ENCODE measurements at regions of chr10 and their contacts with region 1.

Region 1: DNA sequence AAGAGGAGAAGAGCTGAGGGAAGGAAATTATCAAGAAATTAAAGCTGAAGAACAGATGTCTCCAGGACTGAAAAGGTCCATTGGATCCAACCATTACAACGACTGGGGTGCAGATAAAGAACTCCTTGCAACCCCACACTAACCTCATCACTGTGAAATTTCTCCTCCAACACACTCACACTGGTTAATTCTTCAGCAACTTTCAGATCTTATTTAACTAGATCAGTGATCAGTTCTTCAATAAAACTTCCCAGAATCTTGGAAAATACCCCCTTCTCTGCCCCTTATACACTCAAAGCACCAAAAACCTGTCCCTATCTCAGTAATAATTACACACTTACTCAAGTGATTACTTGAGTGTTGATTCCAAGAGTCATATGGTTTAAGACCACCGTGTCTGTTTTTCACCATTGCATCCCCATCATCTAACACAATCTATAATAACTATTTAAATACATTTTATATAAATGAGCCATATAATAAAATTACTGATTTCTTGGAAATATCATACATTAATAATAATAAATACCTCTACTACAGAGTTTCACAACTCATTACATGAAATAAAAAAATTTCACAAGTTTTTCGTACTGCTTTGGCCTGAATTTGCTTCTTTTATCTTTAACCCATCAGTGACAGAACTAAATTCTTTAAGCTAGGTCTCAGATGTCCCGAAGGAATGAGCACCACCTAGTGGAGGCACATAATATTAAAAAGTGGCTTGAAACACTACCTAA is 123.7 kb downstream of the MPP7 start:
- DNase-seq: peak; percentile 51
- ATAC-seq: peak; percentile 28
- H3K4me3 Mint-ChIP-seq: peak overlapping the region; percentile 43
- H3K27ac Mint-ChIP-seq: peak overlapping the region; percentile 97
- H3K4me1 Mint-ChIP-seq: peaks cover 36% of the 10 kb centered on the region
- H3K27me3 Mint-ChIP-seq: no peaks in the 10 kb centered on the region

Region 2: GRCh38 chr10:27099916-27100812 is 1079.0 kb before region 1 on chr10 and contains the start of gene ANKRD26:
- CTCF ChIA-PET with region 1: no interaction called
- POLR2A ChIA-PET with region 1: no interaction called
- intact Hi-C with region 1: loop called in 1 of 2 experiments (anchors 5 kb)
- DNase-seq: peak; percentile 97
- ATAC-seq: peak; percentile 66
- H3K4me3 Mint-ChIP-seq: peak within 1 kb of the TSS; percentile 84
- H3K27ac Mint-ChIP-seq: peak within 1 kb of the TSS; percentile 93
- H3K4me1 Mint-ChIP-seq: peaks cover 49% of the 10 kb centered on the region
- H3K27me3 Mint-ChIP-seq: no peaks in the 10 kb centered on the region
- total RNA-seq, gene ANKRD26: 10.2 to 13.2 TPM

Region 3: DNA sequence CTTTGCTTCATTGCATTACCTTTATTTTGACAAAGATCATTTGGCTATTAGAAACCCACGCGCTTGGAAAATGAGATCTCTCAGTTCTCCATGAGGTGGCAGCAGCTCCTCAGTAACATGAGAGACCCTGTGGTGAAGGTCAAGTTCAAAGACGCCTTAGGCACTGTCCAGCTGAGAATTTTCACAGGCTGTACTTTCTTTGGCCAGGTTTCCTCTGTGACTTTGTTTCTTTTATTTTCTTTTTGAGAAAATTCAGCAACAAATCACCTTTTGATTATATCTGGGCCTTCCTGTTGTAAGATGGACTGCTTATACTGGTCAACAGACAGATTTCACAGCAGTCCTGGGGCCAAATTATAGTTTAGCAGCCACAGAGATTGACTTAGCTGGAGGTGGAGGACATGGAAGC is 620.6 kb before region 1 on chr10:
- CTCF ChIA-PET with region 1: no interaction called
- POLR2A ChIA-PET with region 1: no interaction called
- intact Hi-C with region 1: loop called in 1 of 2 experiments (anchors 5 kb)
- DNase-seq: peak; percentile 50
- ATAC-seq: peak; percentile 30
- H3K4me3 Mint-ChIP-seq: no peak overlapping the region
- H3K27ac Mint-ChIP-seq: no peak overlapping the region
- H3K4me1 Mint-ChIP-seq: no peaks in the 10 kb centered on the region
- H3K27me3 Mint-ChIP-seq: no peaks in the 10 kb centered on the region

Region 4: DNA sequence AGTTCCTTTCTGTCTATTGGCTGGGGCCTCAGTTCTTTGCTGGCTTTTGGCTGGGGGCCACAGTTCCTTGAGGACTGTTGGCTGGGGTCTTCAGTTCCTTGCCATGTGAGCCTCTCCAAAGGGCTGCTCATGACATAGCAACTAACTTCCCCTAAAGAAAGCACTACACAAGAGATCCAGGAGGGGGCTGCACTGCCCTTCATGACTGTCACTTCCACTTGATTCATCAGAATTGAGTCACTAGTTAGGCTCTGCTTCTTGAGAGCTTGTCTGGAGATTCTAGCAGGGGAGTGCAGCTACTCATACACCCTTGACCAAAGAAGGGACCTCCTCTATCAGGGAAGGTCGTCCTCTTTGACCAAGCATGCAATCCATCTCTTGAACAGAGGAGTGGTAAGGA is 395.5 kb before region 1 on chr10:
- CTCF ChIA-PET with region 1: interaction called, 4 read pairs
- POLR2A ChIA-PET with region 1: no interaction called
- intact Hi-C with region 1: loop called in 1 of 2 experiments (anchors 1 kb)
- DNase-seq: peak; percentile 54
- ATAC-seq: peak; percentile 86
- H3K4me3 Mint-ChIP-seq: no peak overlapping the region
- H3K27ac Mint-ChIP-seq: no peak overlapping the region
- H3K4me1 Mint-ChIP-seq: no peaks in the 10 kb centered on the region
- H3K27me3 Mint-ChIP-seq: peaks cover 11% of the 10 kb centered on the region

Region 5: DNA sequence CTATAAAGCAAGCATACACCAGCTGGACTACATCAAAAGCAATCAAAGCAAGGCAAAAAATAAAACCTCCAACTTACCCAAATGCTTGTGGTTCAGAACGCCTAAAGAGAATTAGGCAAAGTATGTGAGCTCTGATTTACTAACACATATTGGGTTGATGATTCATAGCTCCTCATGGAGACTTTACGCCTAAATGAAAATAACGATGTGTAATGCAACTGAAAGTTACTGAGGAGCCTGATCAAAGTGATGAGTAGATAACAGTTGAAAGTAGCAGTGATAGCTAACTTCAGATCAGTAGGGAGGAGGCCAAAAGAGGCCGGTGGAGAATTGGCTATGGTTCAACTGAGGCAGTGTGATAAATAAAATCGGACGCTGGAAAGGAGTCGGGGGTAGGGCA is 38.7 kb after region 1 on chr10:
- CTCF ChIA-PET with region 1: interaction called, 4 read pairs
- POLR2A ChIA-PET with region 1: no interaction called
- intact Hi-C with region 1: loop called in 1 of 2 experiments (anchors 2 kb)
- DNase-seq: peak; percentile 39
- ATAC-seq: peak; percentile 98
- H3K4me3 Mint-ChIP-seq: no peak overlapping the region
- H3K27ac Mint-ChIP-seq: no peak overlapping the region
- H3K4me1 Mint-ChIP-seq: peaks cover 39% of the 10 kb centered on the region
- H3K27me3 Mint-ChIP-seq: no peaks in the 10 kb centered on the region

Region 6: DNA sequence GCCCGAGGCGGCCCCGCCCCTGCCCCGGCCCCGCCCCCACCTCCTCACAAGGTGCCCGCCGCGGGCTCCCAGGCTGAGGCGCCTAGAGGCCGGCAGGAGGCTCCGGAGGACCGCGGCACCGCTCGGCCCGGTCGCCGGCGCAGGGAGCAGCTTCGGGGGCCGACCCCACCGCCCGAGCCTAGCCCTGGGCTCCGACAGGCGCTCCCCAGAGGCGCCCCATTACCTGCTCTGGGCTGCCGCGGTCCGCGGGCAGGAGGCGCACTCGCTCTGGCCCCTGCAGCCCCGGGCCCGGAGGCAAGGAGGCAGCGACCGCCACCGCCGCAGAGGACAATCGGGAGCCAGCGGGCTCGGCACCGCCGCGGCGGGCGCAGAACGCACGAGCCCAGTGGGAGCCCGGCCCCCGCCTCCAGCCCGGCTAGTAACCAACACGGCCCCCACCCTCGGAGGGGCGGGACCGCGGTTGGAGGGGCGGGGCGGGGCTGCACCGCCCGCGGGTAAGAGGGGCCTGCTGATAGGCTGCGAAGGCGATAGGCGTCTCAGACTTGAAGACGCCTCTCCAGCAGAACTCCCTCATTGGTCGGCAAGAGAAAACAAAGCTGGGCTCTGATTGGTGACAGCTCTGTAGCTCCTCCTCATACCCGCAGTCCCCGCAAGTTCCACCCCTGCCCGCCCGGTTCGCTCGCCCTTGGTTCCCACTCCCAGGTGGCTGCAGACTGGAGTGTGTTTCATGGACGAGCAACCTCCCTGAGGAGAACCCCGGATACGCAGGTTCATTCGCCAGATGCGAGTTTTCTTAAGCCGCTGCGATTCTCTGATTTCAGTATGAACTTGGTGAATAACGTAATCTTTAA is 123.7 kb after region 1 on chr10 and contains the start of gene MPP7:
- CTCF ChIA-PET with region 1: interaction called, 3 read pairs
- POLR2A ChIA-PET with region 1: no interaction called
- intact Hi-C with region 1: loop called in 1 of 2 experiments (anchors 2 kb)
- DNase-seq: peak; percentile 97
- ATAC-seq: peak; percentile 97
- H3K4me3 Mint-ChIP-seq: peak within 1 kb of the TSS; percentile 90
- H3K27ac Mint-ChIP-seq: peak within 1 kb of the TSS; percentile 80
- H3K4me1 Mint-ChIP-seq: peaks cover 49% of the 10 kb centered on the region
- H3K27me3 Mint-ChIP-seq: no peaks in the 10 kb centered on the region
- total RNA-seq, gene MPP7: 10.9 to 11.0 TPM

Measured in activated CD4-positive, alpha-beta T cell treated with anti-CD3 and anti-CD28 coated beads for 36 hours (primary cell).